ENCODE measurements at regions of chr12 and their contacts with region 1.

Region 1: DNA sequence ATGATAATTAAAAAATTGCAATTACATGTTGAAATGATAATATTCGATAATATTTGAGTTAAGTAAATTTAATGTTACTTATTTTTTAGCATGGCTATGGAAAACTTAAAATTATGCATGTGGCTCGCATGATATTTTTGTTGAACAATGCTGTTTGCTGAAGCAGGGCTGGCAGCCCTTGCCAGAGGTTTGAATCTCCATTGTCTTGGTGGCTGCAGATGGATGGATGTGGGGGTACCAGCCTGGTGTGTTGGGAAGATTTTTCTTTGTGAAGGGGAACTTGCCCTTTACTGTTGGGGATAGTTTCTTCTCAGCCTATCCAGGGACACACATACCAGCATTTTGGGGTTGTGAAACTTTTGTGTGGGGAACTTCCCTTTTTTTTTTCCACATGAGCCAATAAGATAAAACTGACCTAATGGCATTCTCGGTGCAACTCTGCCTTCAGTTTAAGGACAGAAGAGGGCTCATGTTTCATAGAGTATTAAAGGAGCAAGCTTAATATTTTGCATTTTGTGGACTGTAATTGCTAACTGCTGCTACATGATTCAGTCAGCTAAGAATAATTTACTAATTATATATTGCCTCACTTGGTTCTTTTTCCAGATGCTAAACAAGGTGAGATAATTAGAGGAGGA is 8.8 kb downstream of the RASSF3 start:
- DNase-seq: peak; percentile 82
- H3K4me3 ChIP-seq: peak overlapping the region; percentile 65
- H3K27ac ChIP-seq: peak overlapping the region; percentile 97
- H3K4me1 ChIP-seq: peaks cover 79% of the 10 kb centered on the region
- CTCF ChIP-seq: peak; percentile 33

Region 2: DNA sequence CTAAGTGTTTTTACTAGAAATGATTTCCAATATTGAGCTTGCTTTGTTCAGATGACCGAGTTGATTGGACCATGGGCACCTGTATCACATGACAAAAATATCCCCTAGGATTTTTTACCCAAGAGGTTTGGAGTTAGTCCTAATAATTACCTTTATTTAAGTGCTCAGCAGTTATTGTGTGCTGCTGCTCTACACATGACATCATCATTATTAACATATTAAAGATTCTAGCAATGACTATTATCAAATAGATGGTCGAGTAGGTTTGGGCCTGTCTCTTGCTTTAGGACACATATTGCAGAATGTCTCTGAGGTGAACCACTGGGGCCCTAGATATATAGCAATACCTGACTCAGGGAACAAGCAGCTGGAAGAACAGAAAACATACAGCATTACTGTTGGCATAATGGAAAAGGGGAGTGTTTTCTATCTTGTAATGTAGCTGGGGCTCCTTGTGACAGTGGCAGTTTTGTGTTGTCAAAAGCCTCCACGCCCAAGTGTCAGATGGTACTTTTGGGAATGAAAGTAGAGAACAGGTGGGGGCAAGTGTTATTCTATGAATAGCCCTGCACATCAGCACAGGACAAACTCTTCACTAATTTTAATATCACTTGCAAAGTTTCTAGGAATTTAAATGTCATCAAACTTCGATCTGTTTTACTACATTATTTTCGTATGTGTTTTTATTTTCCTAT is 283.2 kb before region 1 on chr12:
- CTCF ChIA-PET with region 1: no interaction called
- POLR2A ChIA-PET with region 1: no interaction called
- intact Hi-C with region 1: no loop called
- DNase-seq: no peak
- H3K4me3 ChIP-seq: no peak overlapping the region
- H3K27ac ChIP-seq: no peak overlapping the region
- H3K4me1 ChIP-seq: no peaks in the 10 kb centered on the region
- CTCF ChIP-seq: no peak

Region 3: DNA sequence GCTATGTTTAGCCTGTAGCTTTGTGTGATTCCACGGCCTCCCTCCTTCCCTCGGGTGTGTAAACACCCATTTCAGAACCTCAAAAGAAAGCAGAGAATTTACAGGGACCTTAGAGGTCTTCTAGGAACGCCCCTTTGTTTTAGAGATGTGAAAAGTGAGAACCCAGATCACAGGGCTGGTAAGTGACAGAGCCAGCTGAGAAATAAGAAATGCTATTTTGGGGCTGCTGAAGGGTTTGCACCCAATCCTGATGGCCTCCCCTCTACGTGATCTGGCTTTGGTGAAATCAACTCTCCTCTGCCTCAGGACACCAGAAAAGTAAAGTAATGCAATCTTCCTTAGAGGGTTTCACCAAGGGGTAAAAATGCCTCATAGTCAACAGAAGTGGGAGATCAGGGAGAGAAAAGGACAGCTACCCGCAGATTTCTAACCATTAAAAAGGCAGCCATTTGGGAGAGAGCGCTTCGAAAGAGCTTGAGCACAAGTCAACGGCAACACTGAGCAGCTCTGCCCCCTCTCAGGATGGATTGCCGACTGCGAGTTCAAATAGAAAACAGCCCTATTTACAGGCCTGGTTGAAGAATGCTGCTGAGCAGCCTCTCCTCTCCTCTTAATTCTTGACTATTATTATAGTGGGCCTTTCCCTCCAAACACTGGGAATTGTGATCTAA is 87.3 kb before region 1 on chr12:
- CTCF ChIA-PET with region 1: no interaction called
- POLR2A ChIA-PET with region 1: no interaction called
- intact Hi-C with region 1: no loop called
- DNase-seq: no peak
- H3K4me3 ChIP-seq: no peak overlapping the region
- H3K27ac ChIP-seq: no peak overlapping the region
- H3K4me1 ChIP-seq: no peaks in the 10 kb centered on the region
- CTCF ChIP-seq: no peak

Region 4: GRCh38 chr12:64669270-64669842 is 50.3 kb after region 1 on chr12:
- CTCF ChIA-PET with region 1: no interaction called
- POLR2A ChIA-PET with region 1: interaction called, 11 read pairs
- intact Hi-C with region 1: no loop called
- DNase-seq: peak; percentile 77
- H3K4me3 ChIP-seq: peak overlapping the region; percentile 60
- H3K27ac ChIP-seq: peak overlapping the region; percentile 82
- H3K4me1 ChIP-seq: peaks cover 90% of the 10 kb centered on the region
- CTCF ChIP-seq: no peak

Region 5: DNA sequence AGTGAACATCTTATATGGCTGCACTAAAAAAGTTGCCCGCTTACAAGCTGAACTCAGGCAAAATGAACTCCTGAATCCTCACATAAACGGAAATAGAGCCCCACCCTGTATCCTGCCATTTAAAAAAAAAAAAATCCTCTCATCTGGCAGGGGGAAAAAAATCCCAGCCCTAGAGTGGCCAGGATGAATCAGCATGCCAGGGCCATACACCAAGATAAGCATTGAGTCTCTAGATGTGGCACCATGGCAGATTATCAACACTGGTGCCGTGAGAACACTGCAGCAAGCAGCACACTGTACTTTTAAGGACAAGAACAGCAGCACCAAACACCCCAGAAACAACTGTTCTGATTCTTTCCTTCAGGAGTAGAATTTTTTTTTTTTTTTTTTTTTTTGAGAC is 56.7 kb after region 1 on chr12:
- CTCF ChIA-PET with region 1: no interaction called
- POLR2A ChIA-PET with region 1: interaction called, 11 read pairs
- intact Hi-C with region 1: loop called (anchors 2 kb)
- DNase-seq: no peak
- H3K4me3 ChIP-seq: no peak overlapping the region
- H3K27ac ChIP-seq: no peak overlapping the region
- H3K4me1 ChIP-seq: peaks cover 67% of the 10 kb centered on the region
- CTCF ChIP-seq: no peak